ENCODE measurements at regions of chr3 and their contacts with region 1.

Region 1: GRCh38 chr3:51670823-51671733 is at the start of gene TEX264:
- H3K4me3 ChIP-seq: peak within 1 kb of the TSS; percentile 80
- H3K27ac ChIP-seq: peak within 1 kb of the TSS; percentile 65; the same call in 1 of the 2 replicates
- H3K4me1 ChIP-seq: no peaks in the 10 kb centered on the region
- CTCF ChIP-seq: no peak

Region 2: GRCh38 chr3:51657234-51657633 is 13.8 kb before region 1 on chr3:
- CTCF ChIA-PET with region 1: interaction called, 26 read pairs
- POLR2A ChIA-PET with region 1: no interaction called
- H3K4me3 ChIP-seq: no peak overlapping the region
- H3K27ac ChIP-seq: no peak overlapping the region
- H3K4me1 ChIP-seq: no peaks in the 10 kb centered on the region
- CTCF ChIP-seq: no peak

Region 3: DNA sequence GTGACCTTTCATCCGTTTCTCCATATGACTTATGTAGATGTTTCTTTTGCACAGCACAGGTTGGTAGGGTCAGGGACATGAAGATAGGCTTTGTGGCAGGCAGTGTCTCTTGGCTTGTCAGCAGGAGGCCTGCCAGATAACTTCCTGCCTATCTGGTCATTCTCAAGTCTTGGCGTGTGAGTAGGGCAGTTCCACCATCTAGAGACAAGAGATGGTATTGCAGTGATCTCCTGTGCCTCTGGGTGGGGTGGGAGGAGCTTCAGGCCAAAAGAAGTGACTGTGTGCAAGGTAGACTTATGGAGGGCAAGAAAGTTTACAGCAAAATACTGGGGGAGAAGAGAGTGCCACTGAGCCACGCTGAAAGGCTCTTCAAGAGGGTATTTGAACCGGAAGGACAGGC is 11.0 kb after region 1 on chr3:
- CTCF ChIA-PET with region 1: interaction called, 22 read pairs
- POLR2A ChIA-PET with region 1: interaction called, 3 read pairs
- H3K4me3 ChIP-seq: no peak overlapping the region
- H3K27ac ChIP-seq: no peak overlapping the region
- H3K4me1 ChIP-seq: no peaks in the 10 kb centered on the region
- CTCF ChIP-seq: 0 out of 2 replicates have a peak, but pooled peaks have one; percentile 58

Region 4: GRCh38 chr3:51845129-51845528 is 174.1 kb after region 1 on chr3:
- CTCF ChIA-PET with region 1: no interaction called
- POLR2A ChIA-PET with region 1: no interaction called
- H3K4me3 ChIP-seq: no peak overlapping the region
- H3K27ac ChIP-seq: no peak overlapping the region
- H3K4me1 ChIP-seq: no peaks in the 10 kb centered on the region
- CTCF ChIP-seq: no peak